ENCODE measurements at regions of chr16 and their contacts with region 1.

Region 1: DNA sequence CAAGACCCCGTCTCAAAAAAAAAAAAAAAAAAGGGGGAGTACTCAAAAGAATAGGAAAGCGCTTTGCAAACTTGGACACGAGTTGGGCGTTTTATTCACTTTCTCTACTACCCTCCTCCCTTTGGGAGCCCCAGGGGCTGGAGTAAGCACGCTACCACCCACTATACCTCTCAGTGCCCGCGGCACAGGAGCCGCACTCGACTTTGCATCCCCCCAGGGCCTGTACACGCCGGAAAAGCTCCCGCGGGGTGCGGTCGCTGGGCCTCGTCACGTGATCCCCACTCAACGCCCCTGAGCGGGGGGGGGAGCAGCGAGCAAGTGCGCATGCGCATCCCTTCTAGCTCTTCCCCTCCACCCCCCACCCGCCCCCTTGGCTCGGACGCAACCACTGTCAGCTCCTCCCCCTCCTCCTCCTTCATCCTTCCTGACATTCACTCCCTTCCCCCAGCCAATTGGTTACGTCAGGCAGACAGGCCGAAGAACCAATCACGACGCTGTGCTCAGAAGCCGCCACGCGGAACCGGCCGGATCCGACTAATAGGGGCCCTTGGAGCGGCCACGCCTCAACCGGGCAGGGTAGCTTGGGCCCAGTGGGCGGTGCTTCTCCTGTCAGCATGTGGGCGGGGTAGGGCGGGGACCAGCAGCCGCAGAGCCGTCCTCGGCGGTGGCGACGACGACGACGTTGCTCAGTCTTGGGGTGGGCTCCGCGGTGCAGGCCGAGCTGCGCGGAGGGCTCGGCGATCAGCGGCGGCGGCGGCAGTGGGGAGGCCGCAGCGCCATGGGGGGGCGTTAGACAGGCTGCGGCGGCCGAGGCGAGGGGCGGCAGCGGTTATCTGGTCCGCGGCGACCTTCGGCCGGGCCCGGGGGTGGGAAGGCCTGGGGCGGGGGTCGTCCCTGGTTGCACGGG is at the start of gene HAPSTR1:
- DNase-seq: peak; percentile 100
- ATAC-seq: peak; percentile 96 to 97
- H3K4me3 ChIP-seq: peak within 1 kb of the TSS; percentile 95
- H3K27ac ChIP-seq: peak within 1 kb of the TSS; percentile 98
- H3K4me1 ChIP-seq: no peaks in the 10 kb centered on the region
- H3K27me3 ChIP-seq: no peaks in the 10 kb centered on the region
- total RNA-seq, gene HAPSTR1: 39.7 to 50.9 (median 45.1) TPM

Region 2: DNA sequence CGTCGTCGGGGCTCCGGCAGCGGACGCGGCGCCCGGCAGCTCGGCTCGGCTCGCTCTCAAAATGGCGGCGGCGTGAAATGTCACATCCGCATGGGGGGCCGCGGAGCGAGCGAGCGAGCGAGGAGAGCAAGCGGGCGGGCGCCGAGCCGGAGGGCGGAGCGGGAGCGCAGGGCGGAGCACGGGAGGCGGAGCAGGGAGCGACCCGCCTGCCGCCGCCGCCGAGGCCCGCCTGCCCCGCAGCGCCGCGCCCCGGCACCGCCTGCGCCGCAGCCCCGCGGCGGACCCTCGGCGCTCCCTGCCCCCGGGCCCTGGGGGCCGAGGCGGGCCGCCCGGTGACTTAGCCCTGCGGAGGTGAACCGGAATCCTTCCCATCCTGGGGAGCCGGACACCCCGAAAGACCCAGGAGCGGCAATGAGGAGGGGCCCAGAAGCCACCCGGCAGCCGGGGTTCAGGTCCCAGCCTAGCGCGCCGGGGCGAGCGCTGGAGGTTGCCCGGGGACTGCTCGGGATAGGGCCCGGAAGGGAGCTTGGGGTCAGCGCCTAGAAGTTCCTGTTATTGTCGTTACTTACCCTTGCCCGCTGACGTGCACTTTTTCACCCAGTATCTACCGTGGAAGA is 127.3 kb before region 1 on chr16 and contains the start of gene USP7:
- intact Hi-C with region 1: loop called in 1 of 4 experiments (anchors 5 kb)
- DNase-seq: peak; percentile 95 to 98 (median 98)
- ATAC-seq: peak; percentile 95 to 97
- H3K4me3 ChIP-seq: peak within 1 kb of the TSS; percentile 92
- H3K27ac ChIP-seq: peak within 1 kb of the TSS; percentile 87
- H3K4me1 ChIP-seq: peaks cover 22% of the 10 kb centered on the region
- H3K27me3 ChIP-seq: no peaks in the 10 kb centered on the region
- total RNA-seq, gene USP7: 67.1 to 83.3 (median 71.2) TPM

Region 3: DNA sequence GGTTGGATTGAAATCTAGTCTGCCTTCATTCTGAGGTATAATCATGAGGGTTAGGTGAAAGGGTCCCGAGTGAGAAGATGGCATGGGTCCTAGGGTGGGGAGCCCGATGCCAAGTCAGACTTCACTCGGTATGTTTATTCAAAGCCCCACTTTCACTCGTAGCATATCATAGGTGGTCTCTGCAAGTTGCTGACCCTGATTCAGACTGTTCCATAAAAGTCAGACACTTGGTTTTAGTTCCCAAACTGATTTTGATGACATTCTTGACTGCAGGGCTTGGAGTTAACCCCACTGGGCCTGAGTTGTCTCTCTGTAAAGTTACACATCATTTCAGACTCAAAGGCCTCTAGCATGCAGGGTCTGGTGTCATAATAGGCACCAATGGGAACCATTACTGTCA is 18.0 kb after region 1 on chr16:
- intact Hi-C with region 1: loop called in 1 of 4 experiments (anchors 2 kb)
- DNase-seq: no peak
- ATAC-seq: no peak
- H3K4me3 ChIP-seq: no peak overlapping the region
- H3K27ac ChIP-seq: no peak overlapping the region
- H3K4me1 ChIP-seq: peaks cover 32% of the 10 kb centered on the region
- H3K27me3 ChIP-seq: no peaks in the 10 kb centered on the region

Region 4: DNA sequence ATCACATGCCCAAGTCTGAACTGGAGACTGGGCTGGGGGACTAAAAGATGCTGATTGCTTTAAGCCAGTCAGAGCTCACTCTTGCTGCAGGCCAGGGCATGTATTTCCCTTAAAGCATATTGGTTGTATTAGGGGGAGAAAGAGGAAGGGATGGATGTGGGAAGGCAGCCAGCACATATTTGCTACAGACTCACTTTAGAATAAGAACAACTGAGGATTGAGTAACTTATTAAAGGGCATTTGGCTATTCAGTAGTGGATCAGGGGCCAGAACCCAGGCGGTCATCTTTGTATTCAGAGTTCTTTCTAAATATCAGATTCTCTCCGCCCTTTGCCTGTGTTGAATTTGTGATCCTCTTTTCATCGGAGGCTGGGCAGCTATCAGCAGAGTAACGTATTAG is 232.0 kb after region 1 on chr16:
- intact Hi-C with region 1: no loop called
- DNase-seq: no peak
- ATAC-seq: no peak
- H3K4me3 ChIP-seq: no peak overlapping the region
- H3K27ac ChIP-seq: no peak overlapping the region
- H3K4me1 ChIP-seq: no peaks in the 10 kb centered on the region
- H3K27me3 ChIP-seq: no peaks in the 10 kb centered on the region

Measured in right cardiac atrium (tissue), 5 donors.